ENCODE measurements at regions of chr22 and their contacts with region 1.

Region 1: GRCh38 chr22:41563051-41563711 is 2.4 kb downstream of the CSDC2 start:
- DNase-seq: no peak
- H3K4me3 ChIP-seq: peak overlapping the region; percentile 12
- CTCF ChIP-seq: no peak

Region 2: DNA sequence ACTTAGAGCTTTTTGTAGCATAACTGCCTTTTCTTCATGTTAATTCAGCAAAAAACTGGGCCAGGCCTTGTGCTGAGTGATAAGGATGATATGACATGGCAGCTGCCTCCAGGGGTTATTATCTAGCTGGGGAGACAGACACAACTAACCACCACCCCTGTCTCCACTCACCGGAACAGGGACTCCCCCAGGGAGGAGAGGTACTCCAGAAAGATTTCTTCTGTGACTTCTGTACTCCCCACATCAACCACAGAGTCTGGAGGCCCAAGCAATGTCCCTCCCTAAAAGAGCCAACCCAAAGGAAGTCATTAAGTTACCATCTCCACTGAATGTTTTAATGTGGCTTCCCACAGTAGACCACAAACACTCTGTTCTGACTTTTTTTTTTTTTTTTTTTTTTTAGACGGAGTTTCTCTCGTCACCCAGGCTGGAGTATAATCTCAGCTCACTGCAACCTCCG is 40.7 kb after region 1 on chr22:
- in situ Hi-C with region 1: loop called (anchors 5 kb)
- DNase-seq: no peak
- H3K4me3 ChIP-seq: no peak overlapping the region
- CTCF ChIP-seq: no peak